ENCODE measurements at regions of chr6 and their contacts with region 1.

Region 1: DNA sequence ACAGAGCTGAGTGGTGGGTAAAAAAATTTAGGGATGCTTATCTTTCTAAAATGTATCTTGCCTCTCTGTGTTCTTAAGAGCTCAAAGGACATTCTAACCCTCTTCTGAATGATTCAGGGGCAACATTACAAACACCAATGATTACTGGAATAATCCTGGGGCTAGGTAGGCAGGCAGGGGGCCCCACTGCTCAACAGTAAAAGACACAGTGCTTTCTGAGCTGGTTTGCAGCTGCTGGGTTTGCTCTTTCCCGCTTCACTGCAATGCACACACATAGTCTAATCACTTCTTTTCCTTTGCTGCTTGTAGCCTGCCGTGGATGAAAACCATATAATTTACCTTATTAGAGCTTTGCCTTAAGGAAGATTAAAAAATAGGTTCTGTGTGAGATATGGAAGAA is 23.9 kb downstream of the CLDN20 start:
- DNase-seq: peak; percentile 47
- H3K4me3 ChIP-seq: no peak overlapping the region
- H3K27ac ChIP-seq: peak overlapping the region in 1 of 2 experiments; percentile 75; a peak in 2 of 4 replicates
- H3K4me1 ChIP-seq: peaks cover 0 to 13% of the 10 kb centered on the region in 2 experiments; a peak in 2 of 4 replicates
- H3K27me3 ChIP-seq: no peaks in the 10 kb centered on the region
- CTCF ChIP-seq: no peak
- EP300 ChIP-seq: no peak
- RAD21 ChIP-seq: peak; percentile 45

Region 2: DNA sequence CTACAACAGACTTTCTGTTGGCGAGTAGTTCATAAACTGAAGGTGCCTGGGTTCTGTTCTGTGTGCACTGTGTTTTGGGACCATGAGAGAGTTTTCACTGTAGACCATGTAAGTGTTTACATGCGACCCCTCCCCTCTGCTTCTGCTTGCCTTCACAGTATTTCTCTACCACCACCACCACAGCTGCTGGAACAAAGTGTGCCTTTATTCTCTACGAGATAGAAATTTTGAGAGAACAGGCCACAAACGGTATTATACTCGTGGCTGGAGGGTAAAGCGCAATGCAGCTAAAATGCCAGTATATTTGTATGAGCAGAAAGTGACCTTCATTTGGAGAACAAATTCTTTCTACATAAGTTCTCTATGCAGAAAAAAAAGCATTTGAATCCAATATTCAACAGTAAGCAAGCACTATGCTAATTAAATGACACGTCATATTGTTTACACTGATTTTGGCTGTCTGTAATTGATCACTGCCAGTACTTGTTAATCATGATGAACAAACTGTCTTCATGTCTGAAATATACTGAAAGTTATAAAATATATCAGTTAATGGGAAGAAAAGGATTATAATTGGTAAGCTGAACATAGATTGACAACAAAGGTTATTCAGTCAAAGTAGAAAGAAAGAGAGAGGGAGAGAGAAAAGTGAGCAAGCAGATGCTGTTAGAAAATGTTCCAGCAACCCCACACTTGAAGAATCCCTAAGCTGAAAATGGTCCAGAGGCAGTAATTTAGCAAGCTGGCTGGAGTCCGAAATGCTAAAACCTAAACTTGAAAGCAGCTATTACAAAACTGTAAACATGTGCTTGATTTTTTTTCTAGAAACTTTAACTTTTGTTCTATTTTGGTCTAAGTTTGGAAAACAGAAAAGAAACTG is 15.2 kb before region 1 on chr6:
- CTCF ChIA-PET with region 1: interaction called, 26 read pairs
- POLR2A ChIA-PET with region 1: no interaction called
- DNase-seq: no peak
- H3K4me3 ChIP-seq: no peak overlapping the region
- H3K27ac ChIP-seq: peak overlapping the region; percentile 93 to 98
- H3K4me1 ChIP-seq: peaks cover 38 to 79% of the 10 kb centered on the region in 2 experiments
- H3K27me3 ChIP-seq: no peaks in the 10 kb centered on the region
- CTCF ChIP-seq: no peak
- EP300 ChIP-seq: no peak
- RAD21 ChIP-seq: no peak

Region 3: GRCh38 chr6:155301867-155302266 is 14.1 kb after region 1 on chr6:
- CTCF ChIA-PET with region 1: interaction called, 13 read pairs
- POLR2A ChIA-PET with region 1: no interaction called
- DNase-seq: no peak
- H3K4me3 ChIP-seq: no peak overlapping the region
- H3K27ac ChIP-seq: no peak overlapping the region
- H3K4me1 ChIP-seq: peaks cover 0 to 7% of the 10 kb centered on the region in 2 experiments; a peak in 3 of 4 replicates
- H3K27me3 ChIP-seq: no peaks in the 10 kb centered on the region
- CTCF ChIP-seq: no peak
- EP300 ChIP-seq: no peak
- RAD21 ChIP-seq: no peak

Measured in SK-N-SH (cell line).